A549 (cell line): ENCODE measurements at regions of chr16 and their contacts with region 1.

Region 1: GRCh38 chr16:1763521-1764511 is 7.5 kb downstream of the NME3 start:
- DNase-seq: peak in 1 of 2 experiments; percentile 56
- ATAC-seq: peak; percentile 10 to 65; a peak in 3 of 6 replicates
- H3K4me3 ChIP-seq: no peak overlapping the region
- H3K27ac ChIP-seq: no peak overlapping the region
- H3K4me1 ChIP-seq: no peaks in the 10 kb centered on the region
- CTCF ChIP-seq: peak; percentile 46
- EP300 ChIP-seq: no peak
- POLR2A ChIP-seq: no peak
- RAD21 ChIP-seq: peak; percentile 58 to 68; a peak in 4 of 5 replicates

Region 2: DNA sequence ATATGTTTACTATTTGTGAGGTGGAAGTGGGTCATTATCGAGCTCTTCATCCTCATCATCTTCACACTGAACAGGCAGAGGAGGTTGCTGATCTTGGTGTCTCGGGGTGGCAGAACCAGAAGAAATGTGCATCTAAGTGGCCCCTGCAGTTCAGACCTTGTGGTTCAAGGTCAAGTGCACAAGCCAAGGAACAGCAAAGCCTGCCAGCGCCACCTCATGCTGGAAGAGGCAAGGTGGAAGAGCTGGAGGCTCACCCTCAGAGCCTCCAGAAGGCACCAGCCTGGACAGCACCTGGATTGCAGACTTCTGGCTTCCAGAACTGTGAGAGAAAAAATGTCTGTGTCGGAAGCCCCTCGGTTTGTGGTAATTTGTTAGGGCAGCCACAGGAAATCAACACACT is 184.6 kb before region 1 on chr16:
- CTCF ChIA-PET with region 1: no interaction called
- POLR2A ChIA-PET with region 1: no interaction called
- DNase-seq: peak in 1 of 2 experiments; percentile 10
- ATAC-seq: no peak
- H3K4me3 ChIP-seq: no peak overlapping the region
- H3K27ac ChIP-seq: no peak overlapping the region
- H3K4me1 ChIP-seq: no peaks in the 10 kb centered on the region
- CTCF ChIP-seq: no peak
- EP300 ChIP-seq: no peak
- POLR2A ChIP-seq: no peak
- RAD21 ChIP-seq: no peak

Region 3: GRCh38 chr16:1691276-1691675 is 72.5 kb before region 1 on chr16:
- CTCF ChIA-PET with region 1: interaction called, 14 read pairs
- POLR2A ChIA-PET with region 1: interaction called, 3 read pairs
- DNase-seq: peak in 1 of 2 experiments; percentile 52
- ATAC-seq: peak; percentile 61 to 65
- H3K4me3 ChIP-seq: peak overlapping the region; percentile 30; the same call in 2 of the 3 replicates
- H3K27ac ChIP-seq: peak overlapping the region; percentile 85 to 95
- H3K4me1 ChIP-seq: peaks cover 68% of the 10 kb centered on the region
- CTCF ChIP-seq: peak; percentile 38; the same call in 2 of the 3 replicates
- EP300 ChIP-seq: no peak
- POLR2A ChIP-seq: no peak
- RAD21 ChIP-seq: peak; percentile 38 to 45; a peak in 4 of 5 replicates

Region 4: GRCh38 chr16:1745181-1745899 is 18.5 kb before region 1 on chr16:
- CTCF ChIA-PET with region 1: interaction called, 15 read pairs
- POLR2A ChIA-PET with region 1: no interaction called
- DNase-seq: no peak
- ATAC-seq: no peak
- H3K4me3 ChIP-seq: no peak overlapping the region
- H3K27ac ChIP-seq: peak overlapping the region; percentile 72 to 78; a peak in 5 of 6 replicates
- H3K4me1 ChIP-seq: peaks cover 22% of the 10 kb centered on the region
- CTCF ChIP-seq: no peak
- EP300 ChIP-seq: no peak
- POLR2A ChIP-seq: no peak
- RAD21 ChIP-seq: no peak